ENCODE measurements at regions of chr2 and their contacts with region 1.

Region 1: DNA sequence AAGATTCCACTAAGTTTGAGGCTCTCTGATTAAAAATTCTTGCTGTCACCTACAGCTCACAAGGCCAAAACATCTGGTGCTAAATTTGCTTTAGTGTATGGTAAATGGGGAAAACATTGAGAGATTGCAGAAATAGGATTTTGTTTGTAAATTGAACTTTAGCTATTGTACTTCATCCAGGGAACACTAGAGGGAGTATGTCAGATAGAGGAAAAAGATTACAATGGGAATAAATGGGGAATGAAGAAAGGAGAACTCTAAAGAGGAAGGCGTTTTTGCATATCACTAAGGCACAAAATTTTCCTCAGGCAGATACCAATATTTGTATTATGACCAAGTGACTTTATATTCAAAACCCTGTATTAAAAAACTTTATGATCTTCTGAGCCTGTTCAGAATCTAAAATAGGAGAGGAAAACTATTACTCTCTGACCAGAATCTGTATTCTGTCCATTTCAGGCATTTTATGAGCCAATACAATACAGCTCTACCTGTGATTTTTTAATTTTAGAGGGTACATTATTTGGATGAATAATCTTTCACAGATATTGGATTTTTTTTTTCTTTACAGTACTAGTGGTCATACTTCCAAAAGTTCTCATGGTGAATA is 52.3 kb upstream of the ITGB6 start:
- DNase-seq: peak in 2 of 9 donors; percentile 14 to 18
- ATAC-seq: peak; percentile 57
- H3K4me3 ChIP-seq: no peak overlapping the region
- H3K4me3 Mint-ChIP-seq: no peak overlapping the region
- H3K27ac ChIP-seq: no peak overlapping the region
- H3K27ac Mint-ChIP-seq: peak overlapping the region in 1 of 9 donors; percentile 2
- H3K4me1 ChIP-seq: no peaks in the 10 kb centered on the region
- H3K4me1 Mint-ChIP-seq: peaks cover 0 to 5% (median 0%) of the 10 kb centered on the region in 7 donors
- H3K27me3 ChIP-seq: no peaks in the 10 kb centered on the region
- H3K27me3 Mint-ChIP-seq: peaks cover 4 to 18% (median 6%) of the 10 kb centered on the region in 5 donors

Region 2: DNA sequence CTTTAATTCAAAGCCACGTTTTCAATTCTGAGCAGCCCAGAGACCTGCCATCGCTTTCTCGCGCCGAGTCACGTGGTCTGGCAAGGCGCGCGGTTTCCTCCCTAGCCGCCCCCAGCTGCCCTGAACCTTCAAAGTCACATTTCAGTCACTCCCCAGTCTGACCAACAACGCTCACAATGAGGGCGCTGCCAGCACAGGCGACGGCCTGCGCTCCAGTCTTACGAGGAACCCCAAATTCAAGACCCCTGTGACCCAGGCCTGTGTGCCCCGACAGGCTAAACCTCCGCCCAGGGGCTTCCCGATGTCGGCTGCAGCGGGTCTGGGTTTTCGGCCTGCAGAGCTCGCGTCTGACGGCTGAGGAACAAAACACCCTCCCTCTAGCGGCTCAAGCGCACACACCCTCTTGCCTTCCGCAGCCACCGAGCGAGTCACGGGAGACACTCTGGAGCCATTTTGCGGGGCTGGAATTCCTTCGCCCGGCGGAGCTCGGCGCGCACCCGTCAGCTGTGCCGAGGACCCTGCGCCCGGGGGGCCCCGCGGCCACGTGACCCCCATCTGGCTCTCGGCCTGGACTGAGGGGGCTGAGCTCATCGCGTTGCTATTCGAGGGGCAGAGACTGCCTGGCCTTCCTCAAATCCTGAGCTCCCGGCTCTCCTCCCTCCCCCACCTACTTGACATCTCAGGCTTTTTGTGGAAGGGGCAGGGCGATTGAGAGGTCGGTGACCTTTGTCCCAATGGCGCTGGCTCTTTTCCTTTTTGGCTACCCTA is 17.6 kb after region 1 on chr2:
- CTCF ChIA-PET with region 1: interaction called, 4 read pairs
- POLR2A ChIA-PET with region 1: interaction called, 3 read pairs
- intact Hi-C with region 1: loop called in 1 of 2 experiments (anchors 1 kb)
- DNase-seq: peak; percentile 43 to 68 (median 63)
- ATAC-seq: peak; percentile 89
- H3K4me3 ChIP-seq: peak overlapping the region; percentile 59
- H3K4me3 Mint-ChIP-seq: peak overlapping the region; percentile 75 to 95 (median 88)
- H3K27ac ChIP-seq: peak overlapping the region; percentile 66
- H3K27ac Mint-ChIP-seq: peak overlapping the region; percentile 42 to 97 (median 89)
- H3K4me1 ChIP-seq: peaks cover 5 to 7% of the 10 kb centered on the region in 2 donors
- H3K4me1 Mint-ChIP-seq: peaks cover 9 to 44% (median 32%) of the 10 kb centered on the region in 7 donors
- H3K27me3 ChIP-seq: no peaks in the 10 kb centered on the region
- H3K27me3 Mint-ChIP-seq: peaks cover 0 to 10% (median 0%) of the 10 kb centered on the region in 5 donors

Region 3: DNA sequence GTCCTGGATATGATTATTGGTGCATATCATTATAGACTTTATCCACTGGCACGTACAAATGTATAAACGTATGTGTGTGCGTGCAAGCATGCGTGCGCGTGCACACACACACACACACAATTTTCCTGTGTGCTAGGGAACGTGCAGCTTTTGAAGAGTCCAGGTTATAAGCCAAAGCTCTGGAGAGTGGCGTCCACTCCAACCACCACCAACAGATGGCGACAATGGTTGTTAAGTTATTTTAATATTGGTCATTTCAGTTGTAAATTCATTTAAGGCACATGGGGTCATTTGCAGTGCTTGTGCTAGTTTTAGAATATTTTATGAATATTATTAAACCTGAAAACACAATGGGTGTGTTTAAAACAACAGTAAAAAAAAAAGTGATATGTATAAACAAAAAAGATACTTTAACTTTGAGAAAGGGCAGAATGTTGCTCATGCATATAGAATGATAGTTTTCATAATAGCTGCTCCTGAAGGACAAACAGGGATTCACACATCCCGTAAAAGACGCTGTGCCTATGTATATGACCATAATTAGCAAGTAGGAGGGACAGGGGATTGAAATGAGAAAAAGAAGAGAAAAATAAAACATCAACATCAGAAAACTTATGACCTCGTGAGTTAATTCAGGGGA is 71.9 kb after region 1 on chr2:
- CTCF ChIA-PET with region 1: interaction called, 10 read pairs
- POLR2A ChIA-PET with region 1: no interaction called
- intact Hi-C with region 1: loop called in 1 of 2 experiments (anchors 1 kb)
- DNase-seq: peak in 5 of 9 donors; percentile 10 to 38 (median 21)
- ATAC-seq: peak; percentile 64
- H3K4me3 ChIP-seq: no peak overlapping the region
- H3K4me3 Mint-ChIP-seq: peak overlapping the region in 1 of 10 donors; percentile 40
- H3K27ac ChIP-seq: no peak overlapping the region
- H3K27ac Mint-ChIP-seq: peak overlapping the region in 3 of 9 donors; percentile 10 to 65 (median 32)
- H3K4me1 ChIP-seq: peaks cover 10 to 58% of the 10 kb centered on the region in 2 donors
- H3K4me1 Mint-ChIP-seq: peaks cover 61 to 98% (median 96%) of the 10 kb centered on the region in 7 donors
- H3K27me3 ChIP-seq: no peaks in the 10 kb centered on the region
- H3K27me3 Mint-ChIP-seq: no peaks in the 10 kb centered on the region

Region 4: DNA sequence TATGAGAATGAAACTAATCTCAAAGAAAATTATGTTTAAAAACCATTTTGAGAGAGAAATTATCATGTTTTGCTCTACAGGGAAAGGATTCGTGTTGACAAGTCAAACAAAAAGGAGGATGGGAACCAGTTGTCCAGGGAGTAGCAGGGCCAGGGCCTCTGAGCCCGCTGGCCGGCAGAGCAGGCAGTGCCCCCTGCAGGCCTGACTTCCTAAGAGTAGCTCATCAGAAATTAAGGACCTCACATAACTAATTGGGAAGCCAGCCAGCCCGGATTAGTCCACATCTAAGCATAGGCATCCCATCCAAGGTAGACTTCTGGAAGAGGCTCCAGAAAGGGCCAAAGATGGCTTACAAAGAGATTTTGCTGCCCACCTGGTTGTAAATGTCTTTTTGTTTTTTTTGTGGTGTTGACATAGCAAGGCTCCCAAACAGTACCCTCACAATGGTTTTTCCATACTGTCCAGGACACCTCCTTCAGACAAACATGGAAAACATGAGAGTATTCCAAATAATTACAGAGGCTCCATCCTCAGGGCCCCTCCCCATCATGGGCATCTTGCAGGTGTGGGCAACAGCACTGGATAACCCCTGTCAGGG is 666.6 kb after region 1 on chr2:
- CTCF ChIA-PET with region 1: interaction called, 4 read pairs
- POLR2A ChIA-PET with region 1: no interaction called
- intact Hi-C with region 1: loop called (anchors 1 to 5 kb)
- DNase-seq: peak in 7 of 9 donors; percentile 3 to 28 (median 10)
- ATAC-seq: peak; percentile 47
- H3K4me3 ChIP-seq: no peak overlapping the region
- H3K4me3 Mint-ChIP-seq: no peak overlapping the region
- H3K27ac ChIP-seq: no peak overlapping the region
- H3K27ac Mint-ChIP-seq: peak overlapping the region in 1 of 9 donors; percentile 6
- H3K4me1 ChIP-seq: no peaks in the 10 kb centered on the region
- H3K4me1 Mint-ChIP-seq: no peaks in the 10 kb centered on the region
- H3K27me3 ChIP-seq: no peaks in the 10 kb centered on the region
- H3K27me3 Mint-ChIP-seq: peaks cover 0 to 7% (median 0%) of the 10 kb centered on the region in 5 donors

Region 5: DNA sequence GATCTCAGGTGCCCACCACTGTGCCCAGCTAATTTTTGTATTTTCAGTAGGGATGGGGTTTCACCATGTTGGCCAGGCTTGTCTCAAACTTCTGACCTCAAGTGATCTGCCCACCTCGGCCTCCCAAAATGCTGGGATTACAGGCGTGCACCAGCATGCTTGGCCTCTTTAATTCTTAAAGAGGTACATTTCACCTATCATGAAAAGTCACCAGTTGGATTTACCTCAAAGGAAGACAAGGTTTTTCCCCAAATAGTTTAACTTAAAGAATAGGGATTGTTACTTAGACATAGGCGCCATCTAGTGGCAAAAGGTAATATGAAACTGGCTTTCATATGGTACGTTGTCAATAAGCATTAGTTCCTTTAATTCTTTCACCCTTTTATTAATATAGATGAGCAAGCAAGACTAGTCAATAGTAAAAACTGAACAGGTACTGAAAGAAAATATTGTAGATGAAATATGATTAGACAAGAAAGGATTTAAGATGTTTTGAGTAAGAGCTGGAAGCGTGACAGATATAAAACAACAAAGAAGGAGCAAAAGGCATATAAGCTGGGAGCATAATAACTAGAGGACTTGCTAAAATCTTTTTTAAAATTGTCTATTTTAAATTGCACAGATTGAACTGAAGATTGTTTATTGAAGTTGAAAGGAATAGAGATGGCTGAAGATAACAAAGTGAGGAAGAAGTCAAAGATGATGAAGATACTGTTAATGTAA is 1020.8 kb after region 1 on chr2:
- CTCF ChIA-PET with region 1: no interaction called
- POLR2A ChIA-PET with region 1: no interaction called
- intact Hi-C with region 1: loop called in 1 of 2 experiments (anchors 10 kb)
- DNase-seq: peak in 7 of 9 donors; percentile 26 to 65 (median 58)
- ATAC-seq: peak; percentile 80
- H3K4me3 ChIP-seq: no peak overlapping the region
- H3K4me3 Mint-ChIP-seq: no peak overlapping the region
- H3K27ac ChIP-seq: no peak overlapping the region
- H3K27ac Mint-ChIP-seq: no peak overlapping the region
- H3K4me1 ChIP-seq: no peaks in the 10 kb centered on the region
- H3K4me1 Mint-ChIP-seq: peaks cover 0 to 3% (median 0%) of the 10 kb centered on the region in 7 donors
- H3K27me3 ChIP-seq: no peaks in the 10 kb centered on the region
- H3K27me3 Mint-ChIP-seq: peaks cover 4 to 27% (median 5%) of the 10 kb centered on the region in 5 donors